ENCODE measurements at regions of chr5 and their contacts with region 1.

Region 1: GRCh38 chr5:134225618-134226440 is at the start of gene PPP2CA:
- DNase-seq: peak; percentile 96 to 100 (median 99)
- ATAC-seq: peak; percentile 79 to 85 (median 82)
- H3K4me3 ChIP-seq: peak within 1 kb of the TSS; percentile 89 to 94
- H3K4me3 Mint-ChIP-seq: peak within 1 kb of the TSS; percentile 95 to 98 (median 96)
- H3K27ac ChIP-seq: peak within 1 kb of the TSS; percentile 99
- H3K27ac Mint-ChIP-seq: peak within 1 kb of the TSS; percentile 96 to 98
- H3K4me1 ChIP-seq: peaks cover 24 to 27% of the 10 kb centered on the region in 2 experiments
- H3K4me1 Mint-ChIP-seq: peaks cover 46 to 57% (median 55%) of the 10 kb centered on the region in 3 donors
- H3K27me3 ChIP-seq: no peaks in the 10 kb centered on the region
- H3K27me3 Mint-ChIP-seq: no peaks in the 10 kb centered on the region
- total RNA-seq, gene PPP2CA: 87.1 to 168 (median 104) TPM

Region 2: GRCh38 chr5:132473019-132473531 is 1752.8 kb before region 1 on chr5:
- CTCF ChIA-PET with region 1: no interaction called
- POLR2A ChIA-PET with region 1: interaction called in 1 of 2 experiments, 12 read pairs
- DNase-seq: peak; percentile 55 to 94 (median 89)
- ATAC-seq: peak; percentile 68 to 91 (median 86)
- H3K4me3 ChIP-seq: no peak overlapping the region
- H3K4me3 Mint-ChIP-seq: peak overlapping the region; percentile 41 to 46 (median 43)
- H3K27ac ChIP-seq: peak overlapping the region; percentile 85
- H3K27ac Mint-ChIP-seq: peak overlapping the region; percentile 93 to 97
- H3K4me1 ChIP-seq: peaks cover 28 to 98% of the 10 kb centered on the region in 2 experiments
- H3K4me1 Mint-ChIP-seq: peaks cover 85 to 93% (median 90%) of the 10 kb centered on the region in 3 donors
- H3K27me3 ChIP-seq: no peaks in the 10 kb centered on the region
- H3K27me3 Mint-ChIP-seq: no peaks in the 10 kb centered on the region

Region 3: DNA sequence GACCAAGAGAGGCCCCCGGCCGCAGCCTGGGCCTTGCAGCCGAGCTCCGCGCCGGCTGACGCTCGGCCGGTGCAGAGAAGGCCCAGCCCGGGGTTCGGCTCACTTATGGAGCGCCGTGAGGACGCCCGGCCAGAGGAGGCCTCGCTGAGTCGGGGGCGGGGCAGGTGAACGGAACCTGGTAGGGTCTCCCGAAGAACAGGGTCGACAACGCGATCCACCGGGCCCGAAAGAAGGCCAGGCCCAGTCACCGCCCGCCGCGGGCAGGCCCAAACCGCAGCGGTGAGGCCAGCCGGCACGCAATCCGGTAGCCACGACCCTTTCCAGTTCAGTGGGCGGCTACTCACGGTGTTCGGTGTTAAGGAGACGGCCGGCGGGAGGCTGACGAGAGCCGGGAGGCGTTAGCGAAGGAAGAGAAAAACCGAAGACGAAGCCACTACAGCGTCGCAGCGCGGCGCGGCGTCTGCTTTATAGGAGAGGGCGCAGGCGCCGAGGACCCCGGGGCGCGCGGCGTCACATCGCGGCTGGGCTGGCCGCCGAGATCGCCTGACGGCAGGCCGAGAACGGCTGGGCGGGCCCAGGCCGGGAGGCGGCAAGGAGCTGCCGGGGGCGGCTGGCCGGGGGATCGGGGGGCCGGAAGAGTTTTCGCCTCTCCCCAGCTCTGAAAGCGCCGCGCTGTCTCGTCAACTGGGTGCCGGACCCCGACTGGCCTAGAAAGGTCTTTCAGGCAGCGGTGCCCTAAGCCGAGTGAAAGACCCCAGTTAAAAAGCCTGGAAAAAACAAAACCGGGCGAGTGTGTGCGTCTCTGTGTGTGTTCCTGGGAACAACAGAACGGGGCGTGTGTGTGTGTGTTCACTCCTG is 49.1 kb before region 1 on chr5 and contains the start of gene SKP1:
- CTCF ChIA-PET with region 1: interaction called in 1 of 2 experiments, 9 read pairs
- POLR2A ChIA-PET with region 1: interaction called in 1 of 2 experiments, 32 read pairs
- DNase-seq: peak; percentile 73 to 93 (median 84)
- ATAC-seq: peak; percentile 84 to 94 (median 87)
- H3K4me3 ChIP-seq: peak within 1 kb of the TSS; percentile 61 to 96
- H3K4me3 Mint-ChIP-seq: peak within 1 kb of the TSS; percentile 95 to 97 (median 96)
- H3K27ac ChIP-seq: peak within 1 kb of the TSS; percentile 96
- H3K27ac Mint-ChIP-seq: peak within 1 kb of the TSS; percentile 96 to 97
- H3K4me1 ChIP-seq: peaks cover 17 to 26% of the 10 kb centered on the region in 2 experiments
- H3K4me1 Mint-ChIP-seq: peaks cover 36 to 45% (median 36%) of the 10 kb centered on the region in 3 donors
- H3K27me3 ChIP-seq: no peaks in the 10 kb centered on the region
- H3K27me3 Mint-ChIP-seq: no peaks in the 10 kb centered on the region
- total RNA-seq, gene SKP1: 178 to 314 (median 203) TPM

Region 4: DNA sequence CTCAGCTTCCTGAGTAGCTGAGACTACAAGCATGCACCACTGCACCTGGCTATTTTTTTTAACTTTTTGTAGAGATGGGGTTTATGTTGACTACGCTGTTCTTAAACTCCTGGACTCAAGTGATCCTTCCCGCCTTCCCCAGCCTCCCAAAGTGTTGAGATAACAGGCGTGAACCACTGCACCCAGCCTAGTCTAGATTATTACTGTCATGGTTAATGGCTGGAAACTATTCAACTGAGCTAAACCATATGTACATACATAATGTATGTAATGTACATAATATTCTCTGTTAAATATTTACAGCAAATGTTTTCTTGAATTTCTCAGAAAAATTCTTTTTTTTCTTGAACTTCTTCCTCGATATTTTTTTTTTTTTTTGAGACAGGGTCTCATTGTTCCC is 21.3 kb before region 1 on chr5:
- CTCF ChIA-PET with region 1: interaction called, 4 to 7 read pairs
- POLR2A ChIA-PET with region 1: interaction called, 9 to 10 read pairs
- DNase-seq: no peak
- ATAC-seq: no peak
- H3K4me3 ChIP-seq: no peak overlapping the region
- H3K4me3 Mint-ChIP-seq: no peak overlapping the region
- H3K27ac ChIP-seq: no peak overlapping the region
- H3K27ac Mint-ChIP-seq: no peak overlapping the region
- H3K4me1 ChIP-seq: peaks cover 2 to 10% of the 10 kb centered on the region in 2 experiments
- H3K4me1 Mint-ChIP-seq: peaks cover 23 to 36% (median 35%) of the 10 kb centered on the region in 3 donors
- H3K27me3 ChIP-seq: no peaks in the 10 kb centered on the region
- H3K27me3 Mint-ChIP-seq: no peaks in the 10 kb centered on the region

Region 5: GRCh38 chr5:134236318-134236717 is 10.5 kb after region 1 on chr5:
- CTCF ChIA-PET with region 1: interaction called in 1 of 2 experiments, 11 read pairs
- POLR2A ChIA-PET with region 1: interaction called in 1 of 2 experiments, 3 read pairs
- DNase-seq: no peak
- ATAC-seq: no peak
- H3K4me3 ChIP-seq: no peak overlapping the region
- H3K4me3 Mint-ChIP-seq: no peak overlapping the region
- H3K27ac ChIP-seq: no peak overlapping the region
- H3K27ac Mint-ChIP-seq: no peak overlapping the region
- H3K4me1 ChIP-seq: no peaks in the 10 kb centered on the region
- H3K4me1 Mint-ChIP-seq: no peaks in the 10 kb centered on the region
- H3K27me3 ChIP-seq: peaks cover 0 to 3% of the 10 kb centered on the region in 2 experiments
- H3K27me3 Mint-ChIP-seq: peaks cover 0 to 4% of the 10 kb centered on the region in 2 donors

Region 6: GRCh38 chr5:134365604-134366003 is 139.8 kb after region 1 on chr5:
- CTCF ChIA-PET with region 1: no interaction called
- POLR2A ChIA-PET with region 1: interaction called in 1 of 2 experiments, 11 read pairs
- DNase-seq: no peak
- ATAC-seq: no peak
- H3K4me3 ChIP-seq: no peak overlapping the region
- H3K4me3 Mint-ChIP-seq: no peak overlapping the region
- H3K27ac ChIP-seq: no peak overlapping the region
- H3K27ac Mint-ChIP-seq: no peak overlapping the region
- H3K4me1 ChIP-seq: peaks cover 12 to 23% of the 10 kb centered on the region in 2 experiments
- H3K4me1 Mint-ChIP-seq: peaks cover 31 to 37% (median 33%) of the 10 kb centered on the region in 3 donors
- H3K27me3 ChIP-seq: no peaks in the 10 kb centered on the region
- H3K27me3 Mint-ChIP-seq: no peaks in the 10 kb centered on the region

Region 7: GRCh38 chr5:134527146-134527960 is 301.5 kb after region 1 on chr5:
- CTCF ChIA-PET with region 1: no interaction called
- POLR2A ChIA-PET with region 1: interaction called in 1 of 2 experiments, 11 read pairs
- DNase-seq: peak; percentile 21 to 82 (median 58)
- ATAC-seq: peak; percentile 29 to 38 (median 36)
- H3K4me3 ChIP-seq: peak overlapping the region; percentile 85 to 95
- H3K4me3 Mint-ChIP-seq: peak overlapping the region; percentile 87 to 99 (median 97)
- H3K27ac ChIP-seq: peak overlapping the region; percentile 43
- H3K27ac Mint-ChIP-seq: peak overlapping the region; percentile 89 to 92
- H3K4me1 ChIP-seq: peaks cover 15 to 62% of the 10 kb centered on the region in 2 experiments
- H3K4me1 Mint-ChIP-seq: peaks cover 53 to 58% (median 53%) of the 10 kb centered on the region in 3 donors
- H3K27me3 ChIP-seq: no peaks in the 10 kb centered on the region
- H3K27me3 Mint-ChIP-seq: no peaks in the 10 kb centered on the region